Right ventricle myocardium inferior (tissue), 1 donor: ENCODE measurements at regions of chr3 and their contacts with region 1.

Region 1: DNA sequence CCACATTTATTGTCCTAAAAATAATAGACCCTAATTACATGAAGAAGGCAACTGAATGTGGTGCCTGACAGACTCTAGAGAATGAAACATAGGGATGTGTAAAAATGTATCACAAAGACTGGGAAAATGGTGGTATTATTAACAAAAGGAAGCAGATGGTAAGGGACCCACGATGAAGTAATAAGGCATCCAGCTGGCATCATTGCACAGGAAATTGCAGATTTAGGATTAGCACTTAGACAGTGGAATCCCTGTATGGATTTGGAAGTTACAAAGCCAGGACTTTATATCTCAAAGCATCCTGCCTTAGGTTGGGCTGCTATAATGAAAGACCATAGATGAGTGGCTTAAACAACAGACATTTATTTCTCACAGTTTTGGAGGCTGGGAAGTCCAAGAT is 104.3 kb downstream of the PPM1L start:
- DNase-seq: no peak
- ATAC-seq: no peak

Region 2: DNA sequence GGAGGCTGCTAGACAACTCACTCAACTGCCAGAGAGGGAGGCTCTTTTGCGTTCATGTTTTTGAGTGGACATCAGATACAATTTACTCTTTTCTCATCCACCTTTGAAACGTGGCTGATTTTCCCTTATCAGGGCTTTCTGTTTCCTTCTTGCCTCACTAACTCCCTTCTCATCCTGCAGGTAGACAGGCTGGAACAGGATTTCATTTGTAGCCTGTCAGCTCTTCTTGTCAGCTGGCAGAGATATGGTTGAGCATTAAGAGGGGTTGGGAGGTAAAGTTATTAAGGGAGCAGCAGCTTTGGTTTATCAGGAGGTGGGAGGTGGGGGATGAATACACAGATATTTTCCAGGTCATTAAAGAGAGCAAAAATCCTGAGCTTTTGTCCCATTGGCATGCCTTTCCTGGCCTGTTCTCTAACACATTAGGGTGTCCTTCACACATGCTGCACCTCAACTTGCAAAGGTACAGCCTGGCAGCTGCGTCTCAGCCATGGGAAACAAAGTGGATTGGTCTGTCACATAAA is 30.8 kb before region 1 on chr3:
- intact Hi-C with region 1: loop called (anchors 5 kb)
- DNase-seq: no peak
- ATAC-seq: no peak